Activated CD4-positive, alpha-beta memory T cell treated with anti-CD3 and anti-CD28 coated beads, Interleukin-2, amount 10 ng/mL, durations not matched to agents 7 days and 5 days (primary cell): ENCODE measurements at regions of chr3 and their contacts with region 1.

Region 1: DNA sequence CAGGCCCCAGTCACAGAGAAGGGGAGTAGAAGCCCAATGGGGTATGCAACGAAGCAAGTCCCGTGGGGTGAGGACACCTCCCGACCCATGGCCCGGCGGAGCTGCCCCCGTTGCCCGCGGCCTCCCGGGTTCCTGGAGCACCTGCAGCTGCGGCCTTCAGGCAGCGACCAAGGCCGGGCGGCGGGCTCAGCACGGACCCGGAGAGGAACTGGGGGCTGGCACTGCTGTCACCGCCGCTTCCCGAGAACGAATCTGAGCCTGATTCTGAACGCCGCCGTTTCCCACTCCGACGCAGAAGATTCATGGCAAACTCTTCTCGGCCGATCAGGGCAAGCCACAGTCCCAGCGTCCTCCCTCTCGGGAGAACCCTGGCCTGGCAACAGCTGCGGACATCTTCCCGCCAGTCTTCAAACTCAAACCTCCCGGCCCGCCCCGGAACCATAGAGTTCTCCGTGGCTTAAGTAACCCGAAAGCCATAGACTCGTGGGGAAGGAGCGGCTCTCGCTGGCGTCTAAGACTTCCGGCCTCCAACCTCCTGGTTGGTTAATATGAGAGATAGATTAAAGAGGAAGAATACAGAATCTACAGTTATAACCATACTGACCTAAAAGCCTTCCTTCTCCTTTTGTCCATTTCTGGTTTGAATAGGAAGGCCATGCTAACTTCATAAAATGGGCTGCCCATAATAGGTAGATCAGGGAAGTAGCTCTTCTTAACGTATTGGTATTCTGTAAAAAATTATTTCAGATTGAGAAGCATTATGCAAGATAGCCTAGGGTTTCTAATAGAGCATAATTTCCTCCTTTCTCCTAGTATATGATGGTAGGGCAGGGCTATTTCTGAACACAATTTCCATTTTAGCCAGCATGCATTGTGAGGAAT is at the start of gene POLQ:
- DNase-seq: peak; percentile 91
- H3K4me3 Mint-ChIP-seq: peak within 1 kb of the TSS; percentile 97
- H3K27ac Mint-ChIP-seq: peak within 1 kb of the TSS; percentile 86
- H3K4me1 Mint-ChIP-seq: peaks cover 44% of the 10 kb centered on the region
- H3K27me3 Mint-ChIP-seq: no peaks in the 10 kb centered on the region
- total RNA-seq, gene POLQ: 27.0 to 27.9 TPM

Region 2: GRCh38 chr3:120908795-120909601 is 636.8 kb before region 1 on chr3:
- CTCF ChIA-PET with region 1: no interaction called
- POLR2A ChIA-PET with region 1: no interaction called
- DNase-seq: no peak
- H3K4me3 Mint-ChIP-seq: no peak overlapping the region
- H3K27ac Mint-ChIP-seq: peak overlapping the region; percentile 17
- H3K4me1 Mint-ChIP-seq: peaks cover 11% of the 10 kb centered on the region
- H3K27me3 Mint-ChIP-seq: peaks cover 42% of the 10 kb centered on the region

Region 3: DNA sequence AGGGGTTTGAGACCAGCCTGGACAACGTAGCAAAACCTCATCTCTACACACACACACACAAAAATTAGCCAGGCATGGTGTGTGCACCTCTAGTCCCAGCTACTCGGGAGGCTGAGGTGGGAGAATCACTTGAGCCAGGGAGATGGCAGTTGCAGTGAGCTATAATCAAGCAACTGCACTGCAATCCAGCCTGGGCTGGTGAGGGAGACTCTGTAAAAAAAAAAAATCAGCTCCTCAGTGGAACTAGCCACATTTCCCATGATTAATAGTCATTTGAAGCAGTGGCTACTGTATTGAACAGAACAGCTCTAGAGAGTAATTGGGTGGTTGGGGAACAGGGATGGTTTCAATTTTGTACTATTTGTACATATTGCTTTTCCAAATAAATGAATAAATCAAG is 35.9 kb after region 1 on chr3:
- CTCF ChIA-PET with region 1: no interaction called
- POLR2A ChIA-PET with region 1: no interaction called
- DNase-seq: no peak
- H3K4me3 Mint-ChIP-seq: no peak overlapping the region
- H3K27ac Mint-ChIP-seq: no peak overlapping the region
- H3K4me1 Mint-ChIP-seq: no peaks in the 10 kb centered on the region
- H3K27me3 Mint-ChIP-seq: peaks cover 17% of the 10 kb centered on the region

Region 4: DNA sequence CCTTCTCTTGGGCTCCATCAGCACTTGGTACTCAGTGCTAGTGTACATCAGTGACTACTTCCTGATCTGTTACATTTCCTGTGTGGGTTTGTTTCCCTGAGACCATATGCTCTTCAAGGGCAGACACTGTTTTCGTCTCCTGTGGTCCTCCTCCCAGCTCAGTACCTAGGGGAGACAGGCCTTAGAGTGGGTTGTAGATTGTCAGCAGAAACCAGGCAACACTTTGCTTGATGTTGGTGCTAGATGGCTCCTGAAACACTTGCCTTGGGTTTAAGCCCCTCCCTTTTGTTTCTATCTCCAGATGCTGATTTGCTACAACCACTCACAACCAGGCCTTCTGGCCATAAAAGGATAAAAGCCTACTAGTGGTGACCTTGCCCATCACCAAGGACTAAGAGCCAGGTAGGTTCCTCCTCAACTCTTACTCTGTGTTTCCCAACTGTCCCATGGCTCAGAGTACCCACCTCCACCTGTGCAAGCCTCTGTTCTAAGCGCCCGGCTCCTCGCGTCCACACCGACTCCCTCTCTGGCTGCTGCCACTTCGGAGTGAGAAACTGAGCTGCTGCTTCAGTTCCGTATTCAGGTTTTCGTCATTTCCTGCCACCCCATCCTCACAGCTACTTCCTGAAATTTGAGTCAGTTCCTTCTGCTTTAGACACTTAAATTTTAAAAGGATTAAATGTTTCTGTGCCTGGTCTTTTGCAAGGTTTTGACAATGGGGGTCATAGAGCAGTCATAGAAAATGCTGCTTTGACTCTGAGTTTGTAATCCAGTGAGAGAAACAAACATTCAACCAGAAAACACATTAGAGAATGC is 114.7 kb after region 1 on chr3 and contains the start of gene HCLS1:
- CTCF ChIA-PET with region 1: interaction called, 7 read pairs
- POLR2A ChIA-PET with region 1: interaction called, 40 read pairs
- DNase-seq: peak; percentile 80
- H3K4me3 Mint-ChIP-seq: peak within 1 kb of the TSS; percentile 88
- H3K27ac Mint-ChIP-seq: peak within 1 kb of the TSS; percentile 96
- H3K4me1 Mint-ChIP-seq: peaks cover 53% of the 10 kb centered on the region
- H3K27me3 Mint-ChIP-seq: no peaks in the 10 kb centered on the region
- total RNA-seq, gene HCLS1: 380 to 382 TPM

Region 5: GRCh38 chr3:121834696-121835464 is 289.1 kb after region 1 on chr3 and contains the starts of genes EAF2 and IQCB1:
- CTCF ChIA-PET with region 1: no interaction called
- POLR2A ChIA-PET with region 1: interaction called, 27 read pairs
- DNase-seq: peak; percentile 97
- H3K4me3 Mint-ChIP-seq: peak within 1 kb of the TSS; percentile 83
- H3K27ac Mint-ChIP-seq: peak within 1 kb of the TSS; percentile 76
- H3K4me1 Mint-ChIP-seq: peaks cover 55% of the 10 kb centered on the region
- H3K27me3 Mint-ChIP-seq: no peaks in the 10 kb centered on the region
- total RNA-seq, gene EAF2: 21.4 to 23.7 TPM
- total RNA-seq, gene IQCB1: 35.3 to 39.1 TPM

Region 6: GRCh38 chr3:122092460-122093165 is 546.8 kb after region 1 on chr3:
- CTCF ChIA-PET with region 1: interaction called, 10 read pairs
- POLR2A ChIA-PET with region 1: interaction called, 5 read pairs
- DNase-seq: peak; percentile 86
- H3K4me3 Mint-ChIP-seq: peak overlapping the region; percentile 61
- H3K27ac Mint-ChIP-seq: peak overlapping the region; percentile 96
- H3K4me1 Mint-ChIP-seq: peaks cover 68% of the 10 kb centered on the region
- H3K27me3 Mint-ChIP-seq: no peaks in the 10 kb centered on the region

Region 7: GRCh38 chr3:122258757-122259371 is 713.0 kb after region 1 on chr3:
- CTCF ChIA-PET with region 1: interaction called, 22 read pairs
- POLR2A ChIA-PET with region 1: no interaction called
- DNase-seq: peak; percentile 78
- H3K4me3 Mint-ChIP-seq: no peak overlapping the region
- H3K27ac Mint-ChIP-seq: no peak overlapping the region
- H3K4me1 Mint-ChIP-seq: peaks cover 23% of the 10 kb centered on the region
- H3K27me3 Mint-ChIP-seq: peaks cover 5% of the 10 kb centered on the region

Region 8: GRCh38 chr3:122383771-122384697 is 838.2 kb after region 1 on chr3 and contains the start of gene FAM162A:
- CTCF ChIA-PET with region 1: no interaction called
- POLR2A ChIA-PET with region 1: interaction called, 15 read pairs
- DNase-seq: peak; percentile 95
- H3K4me3 Mint-ChIP-seq: peak within 1 kb of the TSS; percentile 88
- H3K27ac Mint-ChIP-seq: peak within 1 kb of the TSS; percentile 86
- H3K4me1 Mint-ChIP-seq: peaks cover 53% of the 10 kb centered on the region
- H3K27me3 Mint-ChIP-seq: no peaks in the 10 kb centered on the region
- total RNA-seq, gene FAM162A: 74.5 to 77.5 TPM

Region 9: DNA sequence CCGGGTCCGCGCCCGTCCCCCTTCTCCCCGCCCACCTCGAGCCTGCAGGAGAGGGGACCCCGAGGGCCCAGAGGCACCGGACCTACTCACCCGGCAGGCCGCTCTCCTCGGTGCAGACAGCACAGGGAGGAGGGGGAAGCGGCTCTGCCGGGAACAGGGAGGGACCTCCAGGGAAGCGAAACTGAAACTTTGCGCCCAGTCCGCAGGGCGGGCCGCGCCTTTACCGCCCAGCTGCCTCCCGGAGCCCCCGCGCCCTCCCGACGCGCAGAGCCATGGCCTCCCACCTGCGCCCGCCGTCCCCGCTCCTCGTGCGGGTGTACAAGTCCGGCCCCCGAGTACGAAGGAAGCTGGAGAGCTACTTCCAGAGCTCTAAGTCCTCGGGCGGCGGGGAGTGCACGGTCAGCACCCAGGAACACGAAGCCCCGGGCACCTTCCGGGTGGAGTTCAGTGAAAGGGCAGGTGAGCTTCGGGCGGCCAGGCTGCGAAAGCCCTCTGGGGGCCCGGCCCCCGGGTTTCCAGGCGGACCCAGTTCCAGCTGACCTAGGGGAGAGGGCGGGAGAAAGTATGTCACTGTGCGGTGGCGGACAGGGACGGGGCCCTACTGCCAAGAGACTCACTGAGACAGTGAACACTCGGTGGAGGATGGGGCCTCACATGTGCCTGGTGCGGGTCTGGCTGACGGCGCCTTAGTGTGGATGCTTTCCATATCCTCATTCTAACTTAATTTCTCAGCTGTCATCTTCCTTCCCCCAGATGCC is 1018.5 kb after region 1 on chr3 and contains the starts of genes DTX3L and PARP9:
- CTCF ChIA-PET with region 1: interaction called, 4 read pairs
- POLR2A ChIA-PET with region 1: interaction called, 12 read pairs
- DNase-seq: peak; percentile 91
- H3K4me3 Mint-ChIP-seq: peak within 1 kb of the TSS; percentile 98
- H3K27ac Mint-ChIP-seq: peak within 1 kb of the TSS; percentile 98
- H3K4me1 Mint-ChIP-seq: peaks cover 74% of the 10 kb centered on the region
- H3K27me3 Mint-ChIP-seq: no peaks in the 10 kb centered on the region
- total RNA-seq, gene DTX3L: 135 to 144 TPM
- total RNA-seq, gene PARP9: 151 to 157 TPM